ENCODE measurements at regions of chr5 and their contacts with region 1.

Region 1: GRCh38 chr5:54658014-54658413 is 140.5 kb downstream of the SNX18 start:
- DNase-seq: peak; percentile 85
- H3K4me3 ChIP-seq: no peak overlapping the region
- H3K27ac ChIP-seq: no peak overlapping the region
- H3K4me1 ChIP-seq: peaks cover 34% of the 10 kb centered on the region
- H3K27me3 ChIP-seq: no peaks in the 10 kb centered on the region
- CTCF ChIP-seq: no peak

Region 2: GRCh38 chr5:54524704-54525103 is 133.3 kb before region 1 on chr5:
- CTCF ChIA-PET with region 1: no interaction called
- POLR2A ChIA-PET with region 1: no interaction called
- intact Hi-C with region 1: loop called (anchors 2 kb)
- DNase-seq: no peak
- H3K4me3 ChIP-seq: peak overlapping the region; percentile 71
- H3K27ac ChIP-seq: peak overlapping the region; percentile 96
- H3K4me1 ChIP-seq: peaks cover 50% of the 10 kb centered on the region
- H3K27me3 ChIP-seq: no peaks in the 10 kb centered on the region
- CTCF ChIP-seq: no peak

Region 3: GRCh38 chr5:54703133-54703532 is 45.1 kb after region 1 on chr5:
- CTCF ChIA-PET with region 1: no interaction called
- POLR2A ChIA-PET with region 1: no interaction called
- intact Hi-C with region 1: loop called (anchors 5 kb)
- DNase-seq: peak; percentile 83
- H3K4me3 ChIP-seq: no peak overlapping the region
- H3K27ac ChIP-seq: peak overlapping the region; percentile 69
- H3K4me1 ChIP-seq: peaks cover 52% of the 10 kb centered on the region
- H3K27me3 ChIP-seq: no peaks in the 10 kb centered on the region
- CTCF ChIP-seq: no peak

Measured in A673 (cell line).